Activated CD8-positive, alpha-beta T cell treated with anti-CD3 and anti-CD28 coated beads for 36 hours (primary cell): ENCODE measurements at regions of chr12 and their contacts with region 1.

Region 1: GRCh38 chr12:52032804-52033502 is 18.3 kb upstream of the NR4A1 start:
- DNase-seq: peak; percentile 96
- ATAC-seq: peak; percentile 93
- H3K4me3 Mint-ChIP-seq: peak overlapping the region; percentile 75
- H3K27ac Mint-ChIP-seq: peak overlapping the region; percentile 88
- H3K4me1 Mint-ChIP-seq: peaks cover 41% of the 10 kb centered on the region
- H3K27me3 Mint-ChIP-seq: no peaks in the 10 kb centered on the region
- CTCF ChIP-seq: no peak

Region 2: DNA sequence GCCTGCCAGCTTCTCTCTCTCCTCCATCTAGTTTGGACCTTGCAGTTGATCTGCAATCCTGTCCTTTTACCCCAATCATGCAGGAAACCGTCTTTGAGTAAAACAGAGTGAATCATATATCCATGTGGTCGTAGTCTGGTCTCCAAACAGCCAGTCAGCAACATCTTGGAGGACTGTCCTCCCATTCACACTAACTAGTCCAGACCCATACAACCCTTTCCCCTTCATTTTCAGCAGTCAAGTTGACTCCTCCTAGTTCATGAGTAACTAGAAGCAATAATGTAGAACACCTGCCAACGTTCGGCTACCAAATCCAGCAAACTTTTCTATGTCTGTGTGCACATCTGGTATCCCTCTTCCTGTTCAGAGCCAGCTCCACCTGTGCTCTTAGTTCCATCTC is 698.2 kb before region 1 on chr12:
- CTCF ChIA-PET with region 1: no interaction called
- POLR2A ChIA-PET with region 1: no interaction called
- intact Hi-C with region 1: no loop called
- DNase-seq: no peak
- ATAC-seq: no peak
- H3K4me3 Mint-ChIP-seq: no peak overlapping the region
- H3K27ac Mint-ChIP-seq: no peak overlapping the region
- H3K4me1 Mint-ChIP-seq: peaks cover 12% of the 10 kb centered on the region
- H3K27me3 Mint-ChIP-seq: no peaks in the 10 kb centered on the region
- CTCF ChIP-seq: no peak

Region 3: DNA sequence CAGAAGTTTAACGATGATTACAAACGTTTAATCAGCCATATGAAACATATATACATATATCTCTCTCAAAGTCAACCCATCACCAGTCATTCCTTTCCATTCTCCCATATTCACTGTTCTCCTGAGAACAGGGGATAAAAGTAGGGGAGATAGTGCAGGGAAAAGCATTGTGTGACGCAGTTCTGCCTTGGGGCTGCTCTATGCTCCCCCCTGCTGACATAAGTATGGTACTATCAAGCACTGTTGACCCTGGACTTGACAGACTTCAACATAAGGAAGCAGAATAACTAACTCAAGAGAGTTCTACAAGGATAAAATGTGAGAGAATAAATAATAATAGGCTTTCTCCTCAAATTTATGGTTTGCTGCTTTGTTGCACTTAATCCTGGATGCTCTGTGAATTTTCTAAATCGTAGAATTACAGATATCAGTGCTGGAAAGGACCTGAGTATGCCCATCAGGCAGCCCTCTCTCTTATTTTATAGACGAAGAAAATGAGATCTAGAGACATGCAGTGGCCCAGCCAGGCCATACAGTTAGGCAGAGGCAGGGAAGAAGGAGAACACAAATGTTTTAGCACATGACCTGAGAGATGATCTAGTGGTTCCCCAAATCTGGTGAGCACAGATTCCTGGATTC is 354.7 kb before region 1 on chr12:
- CTCF ChIA-PET with region 1: no interaction called
- POLR2A ChIA-PET with region 1: no interaction called
- intact Hi-C with region 1: no loop called
- DNase-seq: peak; percentile 32
- ATAC-seq: peak; percentile 85
- H3K4me3 Mint-ChIP-seq: no peak overlapping the region
- H3K27ac Mint-ChIP-seq: no peak overlapping the region
- H3K4me1 Mint-ChIP-seq: no peaks in the 10 kb centered on the region
- H3K27me3 Mint-ChIP-seq: no peaks in the 10 kb centered on the region
- CTCF ChIP-seq: peak; percentile 62

Region 4: DNA sequence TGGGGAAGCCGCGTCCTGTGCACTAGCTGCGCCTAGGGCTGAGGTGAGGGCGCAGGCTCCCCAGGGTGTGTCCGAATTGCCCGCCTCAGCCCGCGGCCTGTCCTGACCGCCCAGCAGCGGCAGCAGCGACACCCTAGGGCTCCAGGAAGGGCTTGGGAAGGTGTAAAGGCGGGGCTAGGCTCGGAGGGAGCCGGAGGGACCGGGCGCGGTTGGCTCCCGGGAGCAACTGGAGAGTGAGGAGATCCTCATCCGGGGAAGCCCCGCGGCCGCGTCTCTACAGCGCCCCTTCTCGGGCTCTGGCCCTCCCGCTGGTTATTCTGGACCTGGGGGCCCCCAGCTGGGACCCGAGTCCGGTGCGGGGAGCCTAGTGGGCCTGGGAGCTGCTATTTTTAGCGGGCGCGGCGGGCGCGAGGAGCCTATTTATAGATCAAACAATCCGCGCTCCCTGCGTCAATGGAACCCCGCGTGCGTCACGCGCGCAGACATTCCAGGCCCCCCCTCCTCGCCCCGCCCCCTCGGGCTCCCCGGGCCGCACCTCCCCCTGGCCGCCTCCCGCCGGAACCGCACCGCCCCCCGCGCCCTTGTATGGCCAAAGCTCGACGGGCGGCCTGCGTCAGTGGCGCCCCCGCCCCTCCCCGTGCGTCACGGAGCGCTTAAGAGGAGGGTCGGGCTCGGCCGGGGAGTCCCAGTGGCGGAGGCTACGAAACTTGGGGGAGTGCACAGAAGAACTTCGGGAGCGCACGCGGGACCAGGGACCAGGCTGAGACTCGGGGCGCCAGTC is 18.0 kb after region 1 on chr12 and contains the start of gene NR4A1:
- CTCF ChIA-PET with region 1: interaction called, 602 read pairs
- POLR2A ChIA-PET with region 1: interaction called, 26 read pairs
- intact Hi-C with region 1: no loop called
- DNase-seq: peak; percentile 99
- ATAC-seq: peak; percentile 93
- H3K4me3 Mint-ChIP-seq: peak within 1 kb of the TSS; percentile 95
- H3K27ac Mint-ChIP-seq: peak within 1 kb of the TSS; percentile 93
- H3K4me1 Mint-ChIP-seq: peaks cover 39% of the 10 kb centered on the region
- H3K27me3 Mint-ChIP-seq: no peaks in the 10 kb centered on the region
- CTCF ChIP-seq: no peak
- total RNA-seq, gene NR4A1: 120 to 128 TPM

Region 5: DNA sequence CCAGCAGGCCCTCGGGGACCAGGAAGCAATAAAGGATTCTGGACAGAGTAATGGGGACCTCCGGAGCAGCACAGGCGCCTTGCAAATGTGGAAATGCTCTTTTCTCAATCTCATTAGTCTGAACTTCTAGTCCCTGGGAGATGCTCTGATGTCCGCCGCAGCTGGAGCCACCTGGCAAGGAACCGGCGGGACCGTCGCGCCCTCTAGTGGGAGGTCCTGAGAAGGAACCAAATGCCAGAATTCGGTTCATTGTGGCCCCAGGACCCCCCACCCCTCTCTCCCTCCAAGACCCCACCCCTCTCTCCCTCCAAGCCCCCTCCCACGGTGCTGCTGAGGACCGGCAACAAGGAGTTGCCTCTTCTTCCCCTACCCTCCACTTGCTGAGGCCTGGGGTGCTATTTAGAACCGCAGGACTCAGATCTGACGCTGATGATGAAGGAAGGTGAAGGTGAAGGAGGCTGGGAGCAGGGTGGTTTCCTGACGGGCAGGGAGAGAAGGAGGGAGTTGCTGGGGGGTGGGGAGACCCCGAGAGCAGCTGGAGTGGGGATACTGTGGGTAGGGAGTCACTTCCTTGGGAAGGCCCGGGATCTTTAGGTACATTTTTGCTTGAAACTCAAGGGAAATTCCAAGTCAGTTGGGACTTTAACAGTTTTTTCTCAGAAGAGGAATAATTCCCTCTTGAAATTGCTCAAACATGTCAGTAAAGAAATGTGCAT is 89.0 kb after region 1 on chr12:
- CTCF ChIA-PET with region 1: interaction called, 313 read pairs
- POLR2A ChIA-PET with region 1: no interaction called
- intact Hi-C with region 1: loop called (anchors 5 kb)
- DNase-seq: peak; percentile 78
- ATAC-seq: no peak
- H3K4me3 Mint-ChIP-seq: no peak overlapping the region
- H3K27ac Mint-ChIP-seq: no peak overlapping the region
- H3K4me1 Mint-ChIP-seq: peaks cover 17% of the 10 kb centered on the region
- H3K27me3 Mint-ChIP-seq: peaks cover 29% of the 10 kb centered on the region
- CTCF ChIP-seq: peak; percentile 92